ENCODE measurements at regions of chr5 and their contacts with region 1.

Region 1: GRCh38 chr5:7146886-7147285 is 249.1 kb upstream of the ADCY2 start:
- DNase-seq: no peak
- H3K4me3 ChIP-seq: no peak overlapping the region
- H3K27ac ChIP-seq: no peak overlapping the region
- H3K4me1 ChIP-seq: no peaks in the 10 kb centered on the region
- H3K27me3 ChIP-seq: no peaks in the 10 kb centered on the region
- CTCF ChIP-seq: no peak
- POLR2A ChIP-seq: no peak

Region 2: DNA sequence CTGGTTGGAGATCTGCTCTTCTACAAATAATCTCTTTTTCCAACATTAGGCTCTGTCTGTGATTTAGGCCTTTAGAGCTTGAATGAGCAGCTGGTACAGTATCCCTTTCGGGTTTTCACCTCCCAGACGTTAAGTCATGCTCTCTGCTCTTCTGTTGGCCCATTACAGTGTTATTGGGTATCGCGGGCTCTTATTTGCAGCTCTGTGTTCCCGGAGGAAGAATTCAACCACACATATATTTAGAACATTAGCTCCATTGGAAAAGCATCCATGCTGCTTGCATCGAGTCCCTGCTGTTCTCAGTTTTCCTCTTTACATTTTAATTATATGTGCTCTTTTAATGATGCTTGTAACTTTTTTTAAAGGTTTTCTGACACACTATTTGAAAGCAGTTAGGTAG is 28.9 kb before region 1 on chr5:
- intact Hi-C with region 1: loop called (anchors 2 kb)
- DNase-seq: no peak
- H3K4me3 ChIP-seq: no peak overlapping the region
- H3K27ac ChIP-seq: no peak overlapping the region
- H3K4me1 ChIP-seq: no peaks in the 10 kb centered on the region
- H3K27me3 ChIP-seq: no peaks in the 10 kb centered on the region
- CTCF ChIP-seq: no peak
- POLR2A ChIP-seq: no peak